ENCODE measurements at regions of chr4 and their contacts with region 1.

Region 1: GRCh38 chr4:101042847-101043246 is 304.5 kb downstream of the PPP3CA start:
- DNase-seq: no peak
- H3K4me3 Mint-ChIP-seq: no peak overlapping the region
- H3K27ac Mint-ChIP-seq: no peak overlapping the region
- H3K4me1 Mint-ChIP-seq: peaks cover 9% of the 10 kb centered on the region
- H3K27me3 Mint-ChIP-seq: no peaks in the 10 kb centered on the region

Region 2: DNA sequence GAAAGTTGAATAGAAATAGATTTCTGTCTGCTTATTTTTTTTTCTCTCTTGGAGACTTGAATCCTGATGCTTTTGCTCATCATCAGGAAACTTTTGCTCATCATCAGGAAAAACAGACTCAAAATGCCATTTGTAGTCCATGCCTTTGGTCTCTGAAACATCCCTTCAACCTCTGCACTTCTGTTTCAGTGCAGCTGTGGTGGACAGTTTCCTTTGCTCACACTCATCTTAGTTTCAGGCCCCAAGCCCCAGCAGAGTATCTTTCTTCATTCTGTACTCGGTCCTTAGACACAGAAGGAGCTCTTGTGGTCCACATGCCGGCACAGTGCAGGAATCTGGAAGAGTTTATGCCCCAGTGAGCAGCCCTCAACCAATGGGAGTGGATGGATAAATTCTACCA is 33.4 kb before region 1 on chr4:
- intact Hi-C with region 1: loop called (anchors 5 kb)
- DNase-seq: no peak
- H3K4me3 Mint-ChIP-seq: no peak overlapping the region
- H3K27ac Mint-ChIP-seq: peak overlapping the region; percentile 23
- H3K4me1 Mint-ChIP-seq: peaks cover 30% of the 10 kb centered on the region
- H3K27me3 Mint-ChIP-seq: no peaks in the 10 kb centered on the region